ENCODE measurements at regions of chr4 and their contacts with region 1.

Region 1: GRCh38 chr4:109967797-109968507 is 55.3 kb downstream of the EGF start:
- DNase-seq: peak; percentile 94
- ATAC-seq: peak; percentile 98
- H3K4me3 ChIP-seq: peak overlapping the region; percentile 51
- H3K27ac ChIP-seq: peak overlapping the region; percentile 85
- H3K4me1 ChIP-seq: peaks cover 29% of the 10 kb centered on the region
- H3K27me3 ChIP-seq: no peaks in the 10 kb centered on the region
- CTCF ChIP-seq: no peak

Region 2: DNA sequence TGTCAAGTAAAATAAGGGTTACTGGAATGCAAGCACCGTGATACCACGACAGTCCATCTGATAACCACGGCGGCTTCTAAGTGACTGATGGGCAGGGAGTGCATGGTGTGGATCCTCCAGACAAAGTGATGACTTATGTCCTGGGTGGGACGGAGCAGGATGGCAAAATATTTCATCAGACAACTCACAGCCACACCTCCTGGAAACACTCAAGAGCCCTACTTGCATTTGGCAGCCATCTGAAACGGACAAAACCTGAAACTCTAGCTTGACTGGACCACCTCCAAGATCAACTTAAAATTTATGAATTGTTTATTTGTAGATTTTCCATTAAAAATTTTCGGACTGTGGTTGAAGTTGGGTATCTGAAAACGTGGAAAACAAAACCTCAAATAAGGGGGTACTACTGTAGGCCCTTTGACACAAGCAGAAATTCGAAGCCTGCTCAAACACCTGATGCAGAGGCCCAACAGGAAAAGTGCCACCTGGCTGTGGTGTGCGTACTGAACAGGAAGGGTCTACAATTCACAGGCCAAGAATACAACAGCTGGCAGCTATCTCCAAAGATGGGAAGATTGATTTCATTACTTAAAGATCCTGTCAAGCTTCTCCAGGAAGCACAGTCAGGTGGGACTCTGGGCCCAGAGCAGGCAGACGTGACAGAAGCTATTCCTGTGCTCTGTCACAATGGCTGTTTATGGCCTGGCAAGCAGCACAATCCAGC is 94.0 kb before region 1 on chr4:
- CTCF ChIA-PET with region 1: no interaction called
- POLR2A ChIA-PET with region 1: no interaction called
- intact Hi-C with region 1: loop called (anchors 5 kb)
- DNase-seq: peak; percentile 58
- ATAC-seq: peak; percentile 85
- H3K4me3 ChIP-seq: no peak overlapping the region
- H3K27ac ChIP-seq: peak overlapping the region; percentile 35
- H3K4me1 ChIP-seq: peaks cover 17% of the 10 kb centered on the region
- H3K27me3 ChIP-seq: no peaks in the 10 kb centered on the region
- CTCF ChIP-seq: no peak

Region 3: DNA sequence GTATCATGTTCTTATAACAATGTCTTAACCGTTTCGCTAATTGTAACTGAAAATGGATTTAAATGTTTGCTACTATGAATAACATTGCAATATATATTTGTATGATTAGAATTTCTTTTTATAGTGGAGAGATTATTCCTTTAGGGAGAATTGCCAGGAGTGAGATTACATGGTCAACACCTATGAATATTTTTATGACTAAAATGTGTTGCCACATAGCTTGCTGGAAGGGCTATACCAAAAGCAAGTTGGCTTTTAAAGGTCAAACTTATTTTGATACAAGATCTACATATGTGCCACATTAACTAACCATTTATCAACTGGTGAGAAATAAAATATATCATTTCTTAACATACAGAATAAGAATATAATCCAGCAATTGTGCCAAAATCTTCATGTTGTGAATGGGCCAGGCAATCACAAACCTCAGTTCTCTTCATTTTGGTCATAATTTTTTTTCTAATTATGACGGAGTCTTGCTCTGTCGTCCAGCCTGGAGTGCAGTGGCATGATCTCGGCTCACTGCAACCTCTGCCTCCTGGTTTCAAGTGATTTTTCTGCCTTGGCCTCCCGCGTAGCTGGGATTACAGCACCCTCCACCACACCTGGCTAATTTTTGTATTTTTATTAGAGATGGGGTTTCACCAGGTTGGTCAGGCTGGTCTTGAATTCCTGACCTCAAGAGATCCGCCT is 65.2 kb before region 1 on chr4:
- CTCF ChIA-PET with region 1: no interaction called
- POLR2A ChIA-PET with region 1: no interaction called
- intact Hi-C with region 1: no loop called
- DNase-seq: no peak
- ATAC-seq: no peak
- H3K4me3 ChIP-seq: no peak overlapping the region
- H3K27ac ChIP-seq: no peak overlapping the region
- H3K4me1 ChIP-seq: no peaks in the 10 kb centered on the region
- H3K27me3 ChIP-seq: no peaks in the 10 kb centered on the region
- CTCF ChIP-seq: no peak

Region 4: DNA sequence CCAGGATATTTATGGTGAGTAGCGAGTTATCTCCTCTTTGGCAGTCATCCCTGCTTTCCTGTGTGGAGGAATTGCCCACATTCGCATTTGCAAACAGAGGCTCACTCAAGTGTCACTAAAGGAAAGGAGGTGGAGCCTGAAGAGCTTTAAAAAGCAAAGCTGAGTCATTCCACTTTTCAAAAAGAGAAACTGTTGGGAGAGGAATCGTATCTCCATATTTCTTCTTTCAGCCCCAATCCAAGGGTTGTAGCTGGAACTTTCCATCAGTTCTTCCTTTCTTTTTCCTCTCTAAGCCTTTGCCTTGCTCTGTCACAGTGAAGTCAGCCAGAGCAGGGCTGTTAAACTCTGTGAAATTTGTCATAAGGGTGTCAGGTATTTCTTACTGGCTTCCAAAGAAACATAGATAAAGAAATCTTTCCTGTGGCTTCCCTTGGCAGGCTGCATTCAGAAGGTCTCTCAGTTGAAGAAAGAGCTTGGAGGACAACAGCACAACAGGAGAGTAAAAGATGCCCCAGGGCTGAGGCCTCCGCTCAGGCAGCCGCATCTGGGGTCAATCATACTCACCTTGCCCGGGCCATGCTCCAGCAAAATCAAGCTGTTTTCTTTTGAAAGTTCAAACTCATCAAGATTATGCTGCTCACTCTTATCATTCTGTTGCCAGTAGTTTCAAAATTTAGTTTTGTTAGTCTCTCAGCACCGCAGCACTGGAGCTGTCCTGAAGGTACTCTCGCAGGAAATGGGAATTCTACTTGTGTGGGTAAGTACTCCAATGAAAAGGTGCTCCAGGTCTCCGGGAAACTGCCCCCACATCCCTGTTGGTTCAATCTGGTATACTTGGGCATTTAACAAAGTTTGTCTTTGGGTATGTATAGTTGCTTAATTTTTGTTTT is 55.0 kb before region 1 on chr4 and contains the start of gene EGF:
- CTCF ChIA-PET with region 1: no interaction called
- POLR2A ChIA-PET with region 1: no interaction called
- intact Hi-C with region 1: loop called (anchors 2 kb)
- DNase-seq: peak; percentile 71
- ATAC-seq: peak; percentile 76
- H3K4me3 ChIP-seq: peak within 1 kb of the TSS; percentile 80
- H3K27ac ChIP-seq: peak within 1 kb of the TSS; percentile 73
- H3K4me1 ChIP-seq: peaks cover 29% of the 10 kb centered on the region
- H3K27me3 ChIP-seq: no peaks in the 10 kb centered on the region
- CTCF ChIP-seq: no peak
- total RNA-seq, gene EGF: 3.9 and 6.1 TPM in 2 replicates

Region 5: DNA sequence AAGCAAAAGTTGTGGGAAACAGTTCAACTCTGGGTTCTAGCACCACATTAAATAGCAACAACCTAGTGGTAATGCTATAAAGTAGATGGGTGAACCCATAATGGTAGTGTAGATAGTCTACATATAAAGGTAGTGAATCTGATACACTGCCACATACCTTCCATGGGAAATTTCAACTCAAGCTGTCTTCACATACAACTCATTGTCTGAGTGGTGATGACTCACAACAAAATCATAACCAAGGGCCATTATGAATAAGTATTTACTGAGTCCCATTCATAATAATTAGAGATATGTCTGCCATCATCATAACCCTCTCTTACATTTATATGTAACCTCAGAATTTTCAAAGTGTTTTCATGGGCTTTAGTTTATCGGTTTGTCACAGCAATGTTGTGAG is 20.5 kb before region 1 on chr4:
- CTCF ChIA-PET with region 1: no interaction called
- POLR2A ChIA-PET with region 1: no interaction called
- intact Hi-C with region 1: loop called (anchors 1 kb)
- DNase-seq: peak; percentile 88
- ATAC-seq: peak; percentile 100
- H3K4me3 ChIP-seq: no peak overlapping the region; the same call in 1 of the 2 replicates
- H3K27ac ChIP-seq: peak overlapping the region; percentile 98
- H3K4me1 ChIP-seq: peaks cover 13% of the 10 kb centered on the region
- H3K27me3 ChIP-seq: no peaks in the 10 kb centered on the region
- CTCF ChIP-seq: no peak

Region 6: DNA sequence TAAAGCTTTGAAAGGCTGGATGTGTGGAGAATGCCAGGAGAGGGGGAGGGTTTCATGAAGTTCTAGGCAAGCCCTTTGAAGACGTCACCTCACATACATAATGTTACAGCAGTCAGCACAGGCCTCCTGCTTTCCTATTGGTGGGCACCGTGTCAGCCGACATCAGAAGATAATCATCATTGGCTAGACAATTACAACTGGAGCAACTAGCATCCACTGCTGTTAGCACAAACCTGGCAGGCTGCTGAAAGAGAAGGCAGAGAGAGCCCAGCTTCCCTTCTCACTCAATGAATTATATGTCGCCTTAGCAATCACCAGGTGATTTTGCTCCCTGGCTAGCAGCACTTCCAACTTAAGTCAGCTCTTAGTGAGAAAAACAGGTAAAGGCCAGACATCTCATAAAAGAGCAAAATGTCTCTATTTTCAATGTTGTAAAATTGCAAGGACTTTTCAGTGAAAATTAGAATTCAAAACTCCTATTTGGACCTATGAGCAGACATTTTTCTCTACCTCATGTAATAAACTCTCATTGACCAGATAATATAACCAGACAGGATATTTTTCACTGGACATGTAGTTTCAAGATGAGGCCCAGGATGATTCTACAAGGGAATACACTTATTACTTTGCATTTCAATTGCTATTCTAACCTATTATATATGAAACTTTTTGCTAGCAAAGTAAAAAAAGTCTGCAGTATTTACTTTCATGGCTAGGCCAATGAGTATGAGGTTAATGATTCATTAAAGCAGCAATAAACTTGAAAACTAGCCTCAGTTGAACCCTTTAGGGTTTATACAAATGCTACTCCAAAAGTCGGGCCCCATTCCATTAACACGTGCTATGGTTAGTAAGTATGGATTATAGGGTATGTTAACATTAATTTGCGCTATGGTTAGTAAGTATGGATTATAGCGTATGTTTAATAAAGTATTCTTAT is 226.1 kb after region 1 on chr4:
- CTCF ChIA-PET with region 1: no interaction called
- POLR2A ChIA-PET with region 1: no interaction called
- intact Hi-C with region 1: no loop called
- DNase-seq: peak; percentile 55
- ATAC-seq: no peak
- H3K4me3 ChIP-seq: no peak overlapping the region
- H3K27ac ChIP-seq: peak overlapping the region; percentile 40; the same call in 1 of the 2 replicates
- H3K4me1 ChIP-seq: peaks cover 5% of the 10 kb centered on the region; the same call in 1 of the 2 replicates
- H3K27me3 ChIP-seq: no peaks in the 10 kb centered on the region
- CTCF ChIP-seq: no peak